ENCODE measurements at regions of chr22 and their contacts with region 1.

Region 1: DNA sequence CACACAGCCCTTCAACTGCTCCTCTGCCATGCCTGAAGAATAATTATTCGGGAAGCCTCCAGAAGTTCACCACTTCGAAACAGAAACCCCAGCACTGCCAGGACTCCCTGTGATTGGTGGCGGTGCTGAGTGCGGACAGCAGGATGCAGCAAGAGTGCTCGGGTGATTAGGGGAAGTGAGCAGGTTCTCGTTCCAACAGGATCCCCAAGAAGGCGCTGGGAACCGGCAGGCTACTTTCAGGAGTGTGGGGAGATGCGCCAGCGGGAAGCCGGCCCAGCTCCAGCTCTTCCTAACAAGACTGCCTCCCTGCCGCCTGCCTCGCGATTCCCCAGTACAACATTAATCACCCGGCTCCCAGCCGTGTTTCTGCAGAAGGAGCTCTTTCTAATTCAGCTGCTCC is 630.2 kb downstream of the BRD1 start:
- DNase-seq: no peak
- ATAC-seq: peak in 1 of 2 donors; percentile 35
- H3K4me3 ChIP-seq: no peak overlapping the region
- H3K27ac ChIP-seq: no peak overlapping the region
- H3K4me1 ChIP-seq: no peaks in the 10 kb centered on the region
- H3K27me3 ChIP-seq: no peaks in the 10 kb centered on the region

Region 2: GRCh38 chr22:49258107-49259010 is 60.9 kb after region 1 on chr22:
- intact Hi-C with region 1: loop called in 1 of 4 experiments (anchors 10 kb)
- DNase-seq: no peak
- ATAC-seq: no peak
- H3K4me3 ChIP-seq: no peak overlapping the region
- H3K27ac ChIP-seq: no peak overlapping the region
- H3K4me1 ChIP-seq: no peaks in the 10 kb centered on the region
- H3K27me3 ChIP-seq: no peaks in the 10 kb centered on the region

Region 3: GRCh38 chr22:49367041-49367697 is 169.7 kb after region 1 on chr22:
- intact Hi-C with region 1: no loop called
- DNase-seq: no peak
- ATAC-seq: no peak
- H3K4me3 ChIP-seq: no peak overlapping the region
- H3K27ac ChIP-seq: no peak overlapping the region
- H3K4me1 ChIP-seq: no peaks in the 10 kb centered on the region
- H3K27me3 ChIP-seq: no peaks in the 10 kb centered on the region